Tibial artery (tissue), 4 donors: ENCODE measurements at regions of chr1 and their contacts with region 1.

Region 1: DNA sequence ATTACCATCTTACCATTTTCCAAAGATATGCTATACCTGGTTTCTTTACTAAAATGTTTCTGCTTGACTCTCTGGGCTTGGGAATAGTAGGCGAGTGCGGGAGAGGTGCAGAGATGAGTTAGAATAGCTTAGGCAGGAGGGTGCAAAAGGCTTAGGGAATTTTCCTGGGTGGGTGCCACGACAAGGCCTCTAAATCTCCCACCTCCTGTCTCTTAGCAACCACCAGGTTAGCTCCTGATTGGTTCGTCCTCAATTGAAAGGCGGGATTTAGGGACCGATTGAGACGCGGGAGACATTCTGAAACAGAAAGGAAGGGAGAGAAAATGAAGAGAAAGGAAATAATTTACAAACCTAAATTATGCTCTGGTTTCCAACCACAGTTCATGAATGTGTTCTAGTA is 3.1 kb downstream of the ACKR1 start:
- DNase-seq: no peak
- H3K4me3 ChIP-seq: no peak overlapping the region
- H3K27ac ChIP-seq: no peak overlapping the region
- H3K4me1 ChIP-seq: no peaks in the 10 kb centered on the region
- H3K27me3 ChIP-seq: peaks cover 0 to 65% of the 10 kb centered on the region in 2 donors
- CTCF ChIP-seq: no peak

Region 2: GRCh38 chr1:159168043-159168442 is 39.7 kb before region 1 on chr1:
- intact Hi-C with region 1: loop called (anchors 5 kb)
- DNase-seq: no peak
- H3K4me3 ChIP-seq: no peak overlapping the region
- H3K27ac ChIP-seq: no peak overlapping the region
- H3K4me1 ChIP-seq: peaks cover 0 to 21% (median 13%) of the 10 kb centered on the region in 4 donors
- H3K27me3 ChIP-seq: peaks cover 0 to 42% of the 10 kb centered on the region in 2 donors
- CTCF ChIP-seq: no peak

Region 3: DNA sequence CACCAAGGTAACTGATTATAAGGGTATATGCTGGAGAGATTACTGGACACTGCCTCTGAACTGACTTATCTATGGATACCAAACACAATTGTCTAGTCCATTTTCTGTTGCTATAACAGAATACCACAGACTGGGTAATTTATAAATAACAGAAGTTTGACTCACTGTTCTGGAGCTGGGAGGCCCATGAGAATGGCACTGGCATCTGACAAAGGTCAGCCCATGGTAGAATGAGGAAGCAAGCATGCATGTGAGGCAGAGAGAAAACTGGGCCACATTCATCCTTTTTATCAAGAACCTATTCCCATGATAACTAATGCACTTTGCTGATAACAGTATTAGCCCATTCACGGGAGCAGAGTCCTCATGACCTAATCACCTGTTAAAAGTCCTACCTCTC is 131.8 kb after region 1 on chr1:
- intact Hi-C with region 1: no loop called
- DNase-seq: no peak
- H3K4me3 ChIP-seq: no peak overlapping the region
- H3K27ac ChIP-seq: no peak overlapping the region
- H3K4me1 ChIP-seq: no peaks in the 10 kb centered on the region
- H3K27me3 ChIP-seq: no peaks in the 10 kb centered on the region
- CTCF ChIP-seq: no peak